CD8-positive, alpha-beta T cell (primary cell): ENCODE measurements at regions of chr3 and their contacts with region 1.

Region 1: DNA sequence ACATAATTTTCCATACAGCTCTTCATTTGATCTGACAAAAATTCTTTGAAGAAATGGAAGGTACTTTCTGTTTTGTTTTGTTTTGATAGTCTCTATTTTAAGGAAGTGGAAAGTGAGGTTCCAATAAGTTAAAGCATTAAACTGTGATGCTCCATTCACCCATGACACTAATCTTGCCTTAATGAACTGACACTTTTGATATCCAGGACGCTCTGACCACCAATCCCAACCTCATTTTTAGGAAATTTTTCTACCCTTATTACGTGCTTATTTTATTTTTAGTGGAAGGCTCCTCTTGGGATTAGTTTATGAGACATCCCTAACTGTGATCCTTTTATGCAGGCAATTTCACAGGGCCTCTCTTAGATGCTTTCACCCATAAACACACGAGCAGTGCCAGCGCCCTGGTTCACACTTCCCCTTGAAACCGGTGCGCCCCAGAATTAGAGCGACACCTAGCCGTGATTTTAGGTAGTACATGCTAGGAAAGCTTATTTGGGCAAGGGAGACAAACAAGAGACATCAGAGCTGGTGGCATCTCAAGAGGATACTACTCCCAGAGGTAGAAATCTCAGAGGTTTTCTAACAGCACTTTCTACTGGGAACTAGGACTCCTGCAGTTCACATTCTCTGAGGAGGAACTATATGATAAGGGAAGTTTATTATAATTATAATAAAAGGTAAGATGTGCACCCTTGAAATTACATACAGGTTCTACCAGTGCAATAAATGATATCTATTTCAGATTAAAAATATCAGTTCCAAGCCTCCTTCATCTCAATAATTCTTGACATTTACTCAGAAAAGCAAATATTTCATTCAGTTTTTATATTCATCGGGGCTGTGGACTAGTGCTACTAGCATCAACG is 173.9 kb downstream of the SLC9A9 start:
- DNase-seq: peak; percentile 54 to 81 (median 72)
- ATAC-seq: peak; percentile 97
- H3K4me3 ChIP-seq: no peak overlapping the region
- H3K4me3 Mint-ChIP-seq: peak overlapping the region; percentile 36
- H3K27ac ChIP-seq: no peak overlapping the region
- H3K27ac Mint-ChIP-seq: peak overlapping the region; percentile 60
- H3K4me1 ChIP-seq: peaks cover 4% of the 10 kb centered on the region
- H3K4me1 Mint-ChIP-seq: peaks cover 8% of the 10 kb centered on the region
- H3K27me3 ChIP-seq: no peaks in the 10 kb centered on the region
- H3K27me3 Mint-ChIP-seq: no peaks in the 10 kb centered on the region
- CTCF ChIP-seq: peak; percentile 90

Region 2: GRCh38 chr3:142595951-142596725 is 1078.2 kb before region 1 on chr3 and contains the start of gene PLS1:
- CTCF ChIA-PET with region 1: no interaction called
- POLR2A ChIA-PET with region 1: no interaction called
- intact Hi-C with region 1: loop called in 1 of 2 experiments (anchors 1 kb)
- DNase-seq: peak; percentile 74 to 91 (median 83)
- ATAC-seq: peak; percentile 87
- H3K4me3 ChIP-seq: peak within 1 kb of the TSS; percentile 75 to 84
- H3K4me3 Mint-ChIP-seq: peak within 1 kb of the TSS; percentile 96
- H3K27ac ChIP-seq: peak within 1 kb of the TSS; percentile 28 to 34
- H3K27ac Mint-ChIP-seq: peak within 1 kb of the TSS; percentile 89
- H3K4me1 ChIP-seq: peaks cover 17% of the 10 kb centered on the region
- H3K4me1 Mint-ChIP-seq: peaks cover 17% of the 10 kb centered on the region
- H3K27me3 ChIP-seq: no peaks in the 10 kb centered on the region
- H3K27me3 Mint-ChIP-seq: peaks cover 11% of the 10 kb centered on the region
- CTCF ChIP-seq: no peak
- total RNA-seq, gene PLS1: 0.57 to 2.0 TPM

Region 3: GRCh38 chr3:143056372-143056771 is 618.0 kb before region 1 on chr3:
- CTCF ChIA-PET with region 1: no interaction called
- POLR2A ChIA-PET with region 1: no interaction called
- intact Hi-C with region 1: loop called in 1 of 2 experiments (anchors 10 kb)
- DNase-seq: no peak
- ATAC-seq: no peak
- H3K4me3 ChIP-seq: no peak overlapping the region
- H3K4me3 Mint-ChIP-seq: no peak overlapping the region
- H3K27ac ChIP-seq: no peak overlapping the region
- H3K27ac Mint-ChIP-seq: no peak overlapping the region
- H3K4me1 ChIP-seq: no peaks in the 10 kb centered on the region
- H3K4me1 Mint-ChIP-seq: no peaks in the 10 kb centered on the region
- H3K27me3 ChIP-seq: no peaks in the 10 kb centered on the region
- H3K27me3 Mint-ChIP-seq: no peaks in the 10 kb centered on the region
- CTCF ChIP-seq: no peak

Region 4: DNA sequence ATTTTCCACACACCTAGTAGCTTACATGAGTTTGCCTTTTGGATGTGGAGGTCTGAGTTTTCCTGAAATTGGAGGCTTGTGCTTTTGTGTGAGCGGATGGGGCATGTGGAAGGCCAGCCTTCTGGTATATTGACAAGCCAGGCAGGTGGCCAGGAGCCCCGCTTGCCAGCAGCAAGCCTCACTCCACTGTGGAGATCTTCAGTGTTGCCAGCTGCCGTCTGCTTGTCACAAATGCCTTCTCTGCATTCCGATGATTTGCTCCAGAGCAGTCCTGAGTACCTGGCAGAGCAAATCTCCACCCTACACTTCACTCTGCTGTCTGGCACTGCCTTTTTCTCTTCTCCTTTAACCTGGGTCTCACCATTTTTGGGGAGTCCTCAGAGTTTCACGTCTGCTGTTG is 583.8 kb before region 1 on chr3:
- CTCF ChIA-PET with region 1: no interaction called
- POLR2A ChIA-PET with region 1: no interaction called
- intact Hi-C with region 1: no loop called
- DNase-seq: no peak
- ATAC-seq: no peak
- H3K4me3 ChIP-seq: no peak overlapping the region
- H3K4me3 Mint-ChIP-seq: no peak overlapping the region
- H3K27ac ChIP-seq: no peak overlapping the region
- H3K27ac Mint-ChIP-seq: no peak overlapping the region
- H3K4me1 ChIP-seq: no peaks in the 10 kb centered on the region
- H3K4me1 Mint-ChIP-seq: no peaks in the 10 kb centered on the region
- H3K27me3 ChIP-seq: no peaks in the 10 kb centered on the region
- H3K27me3 Mint-ChIP-seq: no peaks in the 10 kb centered on the region
- CTCF ChIP-seq: no peak

Region 5: DNA sequence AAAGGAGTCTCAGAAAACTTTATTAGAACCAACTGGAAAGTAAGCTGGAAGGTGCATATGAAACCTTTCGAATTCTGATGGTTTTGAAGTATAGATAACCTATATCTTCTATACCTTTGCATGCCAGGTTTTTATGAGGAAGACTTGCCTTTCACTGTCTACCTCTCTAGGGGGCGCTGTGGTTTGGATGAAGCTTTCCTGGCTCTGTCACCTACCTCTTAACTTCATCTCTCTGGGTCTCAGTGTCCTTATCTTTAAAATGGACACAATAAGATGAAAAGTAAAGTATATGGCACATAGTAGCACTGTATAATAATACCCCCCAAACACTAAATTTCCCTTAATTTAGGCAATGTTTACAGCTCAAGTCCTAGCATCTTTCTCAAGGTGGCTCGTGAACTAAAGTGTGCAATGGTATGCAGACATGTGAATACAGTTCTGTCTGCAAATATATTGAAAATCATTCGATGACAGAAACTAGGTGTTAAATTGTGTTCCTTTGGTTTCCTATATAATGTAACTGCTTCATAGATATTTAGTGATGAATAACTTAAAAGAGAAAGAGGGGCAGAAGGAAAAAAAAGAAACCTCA is 240.5 kb before region 1 on chr3:
- CTCF ChIA-PET with region 1: interaction called, 3 read pairs
- POLR2A ChIA-PET with region 1: no interaction called
- intact Hi-C with region 1: loop called in 1 of 2 experiments (anchors 10 kb)
- DNase-seq: peak in 2 of 9 experiments; percentile 9 to 27
- ATAC-seq: no peak
- H3K4me3 ChIP-seq: no peak overlapping the region
- H3K4me3 Mint-ChIP-seq: no peak overlapping the region
- H3K27ac ChIP-seq: no peak overlapping the region
- H3K27ac Mint-ChIP-seq: no peak overlapping the region
- H3K4me1 ChIP-seq: no peaks in the 10 kb centered on the region
- H3K4me1 Mint-ChIP-seq: no peaks in the 10 kb centered on the region
- H3K27me3 ChIP-seq: no peaks in the 10 kb centered on the region
- H3K27me3 Mint-ChIP-seq: no peaks in the 10 kb centered on the region
- CTCF ChIP-seq: peak; percentile 40